GM12878 (cell line): ENCODE measurements at regions of chr2 and their contacts with region 1.

Region 1: GRCh38 chr2:102114290-102114721 is 28.2 kb upstream of the IL1R1 start:
- DNase-seq: peak; percentile 33
- ATAC-seq: peak; percentile 67
- H3K4me3 ChIP-seq: no peak overlapping the region
- H3K27ac ChIP-seq: peak overlapping the region; percentile 17; the same call in 1 of the 2 replicates
- H3K4me1 ChIP-seq: peaks cover 14% of the 10 kb centered on the region
- H3K27me3 ChIP-seq: no peaks in the 10 kb centered on the region
- CTCF ChIP-seq: no peak
- EP300 ChIP-seq: no peak
- POLR2A ChIP-seq: no peak
- RAD21 ChIP-seq: no peak

Region 2: DNA sequence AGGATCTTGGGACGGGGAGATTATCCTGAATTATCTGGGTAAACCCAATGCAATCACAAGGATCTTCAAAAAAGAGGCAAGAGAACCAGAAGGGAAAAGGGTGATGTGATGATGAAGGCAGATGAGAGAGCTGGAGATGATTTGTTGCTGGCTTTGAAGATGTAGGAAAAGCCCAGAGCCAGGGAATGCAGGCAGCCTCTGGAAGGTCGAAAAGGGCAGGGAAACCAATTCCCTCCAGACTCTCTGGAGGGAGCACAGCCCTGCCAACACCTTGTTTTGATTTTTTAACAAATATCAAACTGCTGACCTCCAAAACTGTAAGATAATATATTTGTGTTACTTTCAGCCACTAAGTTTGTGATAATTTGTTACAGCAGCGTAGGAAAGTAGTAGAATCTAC is 171.5 kb before region 1 on chr2:
- CTCF ChIA-PET with region 1: no interaction called
- POLR2A ChIA-PET with region 1: no interaction called
- RAD21 ChIA-PET with region 1: no interaction called
- SMC1A ChIA-PET with region 1: no interaction called
- in situ Hi-C with region 1: no loop called
- intact Hi-C with region 1: no loop called
- DNase-seq: no peak
- ATAC-seq: no peak
- H3K4me3 ChIP-seq: no peak overlapping the region
- H3K27ac ChIP-seq: no peak overlapping the region
- H3K4me1 ChIP-seq: no peaks in the 10 kb centered on the region
- H3K27me3 ChIP-seq: no peaks in the 10 kb centered on the region
- CTCF ChIP-seq: no peak
- EP300 ChIP-seq: no peak
- POLR2A ChIP-seq: no peak
- RAD21 ChIP-seq: no peak

Region 3: DNA sequence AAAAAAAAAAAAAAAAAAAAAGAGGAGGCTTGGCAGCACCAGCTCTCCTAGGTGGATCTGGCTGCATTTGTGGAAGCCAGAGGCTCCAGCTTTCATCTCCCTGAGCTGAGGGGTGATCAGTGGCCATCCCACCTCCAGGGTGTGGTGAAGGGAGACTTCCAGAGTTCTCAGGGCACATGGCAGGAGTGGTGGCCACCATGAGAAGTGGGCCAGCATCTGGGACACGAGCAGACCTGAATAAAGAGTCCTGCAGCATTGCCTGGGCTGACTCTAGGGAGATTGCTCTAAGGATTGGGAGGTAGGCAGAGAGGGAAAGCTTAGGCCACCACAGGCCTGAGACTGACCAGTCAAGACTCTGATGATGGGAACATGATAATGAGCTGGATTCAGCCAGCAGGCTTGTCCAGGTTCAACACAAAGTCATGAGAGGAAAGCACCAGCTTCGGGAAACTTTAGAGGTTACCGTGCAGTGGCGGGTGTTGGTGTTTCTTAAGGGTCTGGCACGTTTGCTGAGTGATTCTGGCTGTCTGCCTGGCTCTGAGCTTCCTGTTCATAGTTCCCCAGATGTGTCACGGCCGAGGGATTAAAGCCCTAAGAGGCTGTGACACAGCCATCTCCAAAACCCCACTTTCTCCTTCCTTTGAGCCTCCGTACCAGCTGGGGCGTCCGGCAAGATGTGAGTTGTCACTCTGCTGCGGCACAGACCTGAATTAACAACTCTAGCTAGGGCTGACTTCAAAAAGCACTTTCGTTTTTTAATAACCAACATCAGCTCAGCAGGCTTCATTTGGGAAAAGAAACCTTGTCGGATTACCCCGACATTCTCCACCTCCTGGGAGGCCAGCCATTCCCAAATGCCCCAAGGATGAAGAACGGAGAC is 10.1 kb before region 1 on chr2:
- CTCF ChIA-PET with region 1: interaction called, 12 read pairs
- POLR2A ChIA-PET with region 1: interaction called, 4 read pairs
- RAD21 ChIA-PET with region 1: interaction called, 27 read pairs
- SMC1A ChIA-PET with region 1: interaction called, 32 read pairs
- in situ Hi-C with region 1: no loop called
- intact Hi-C with region 1: no loop called
- DNase-seq: peak; percentile 67
- ATAC-seq: peak; percentile 79
- H3K4me3 ChIP-seq: peak overlapping the region; percentile 53
- H3K27ac ChIP-seq: peak overlapping the region; percentile 37; the same call in 1 of the 2 replicates
- H3K4me1 ChIP-seq: no peaks in the 10 kb centered on the region
- H3K27me3 ChIP-seq: no peaks in the 10 kb centered on the region
- CTCF ChIP-seq: no peak
- EP300 ChIP-seq: peak in 1 of 2 experiments; percentile 54; a peak in 2 of 4 replicates
- POLR2A ChIP-seq: no peak
- RAD21 ChIP-seq: no peak

Region 4: DNA sequence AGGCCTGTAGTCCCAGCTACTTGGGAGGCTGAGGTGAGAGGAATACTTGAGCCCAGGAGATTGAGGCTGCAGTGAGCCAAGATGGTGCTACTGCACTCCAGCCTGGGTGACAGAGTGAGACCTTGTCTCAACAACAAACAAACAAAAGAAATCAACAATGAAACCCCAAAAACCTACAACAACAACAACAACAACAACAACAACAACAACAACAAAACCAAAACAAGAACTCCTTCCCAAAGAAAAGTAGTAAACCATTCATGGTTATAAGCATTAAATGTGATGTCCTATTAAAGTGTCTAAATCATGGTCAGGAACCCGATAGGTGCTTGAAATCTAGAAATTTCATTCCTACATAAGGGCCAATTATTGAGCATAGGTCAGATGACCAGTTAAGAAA is 14.8 kb after region 1 on chr2:
- CTCF ChIA-PET with region 1: interaction called, 4 read pairs
- POLR2A ChIA-PET with region 1: no interaction called
- RAD21 ChIA-PET with region 1: interaction called, 10 read pairs
- SMC1A ChIA-PET with region 1: interaction called, 17 read pairs
- in situ Hi-C with region 1: no loop called
- intact Hi-C with region 1: no loop called
- DNase-seq: no peak
- ATAC-seq: no peak
- H3K4me3 ChIP-seq: no peak overlapping the region
- H3K27ac ChIP-seq: no peak overlapping the region
- H3K4me1 ChIP-seq: no peaks in the 10 kb centered on the region
- H3K27me3 ChIP-seq: no peaks in the 10 kb centered on the region
- CTCF ChIP-seq: no peak
- EP300 ChIP-seq: no peak
- POLR2A ChIP-seq: no peak
- RAD21 ChIP-seq: no peak

Region 5: GRCh38 chr2:102155642-102156491 is 41.6 kb after region 1 on chr2:
- CTCF ChIA-PET with region 1: no interaction called
- POLR2A ChIA-PET with region 1: no interaction called
- RAD21 ChIA-PET with region 1: no interaction called
- SMC1A ChIA-PET with region 1: interaction called, 10 read pairs
- in situ Hi-C with region 1: no loop called
- intact Hi-C with region 1: no loop called
- DNase-seq: no peak
- ATAC-seq: no peak
- H3K4me3 ChIP-seq: no peak overlapping the region
- H3K27ac ChIP-seq: no peak overlapping the region
- H3K4me1 ChIP-seq: no peaks in the 10 kb centered on the region
- H3K27me3 ChIP-seq: no peaks in the 10 kb centered on the region
- CTCF ChIP-seq: no peak
- EP300 ChIP-seq: no peak
- POLR2A ChIP-seq: no peak
- RAD21 ChIP-seq: no peak

Region 6: GRCh38 chr2:102366406-102367112 is 252.3 kb after region 1 on chr2:
- CTCF ChIA-PET with region 1: no interaction called
- POLR2A ChIA-PET with region 1: no interaction called
- RAD21 ChIA-PET with region 1: no interaction called
- SMC1A ChIA-PET with region 1: no interaction called
- in situ Hi-C with region 1: no loop called
- intact Hi-C with region 1: loop called (anchors 10 kb)
- DNase-seq: peak; percentile 91
- ATAC-seq: peak; percentile 79
- H3K4me3 ChIP-seq: no peak overlapping the region
- H3K27ac ChIP-seq: peak overlapping the region; percentile 93
- H3K4me1 ChIP-seq: peaks cover 23% of the 10 kb centered on the region
- H3K27me3 ChIP-seq: no peaks in the 10 kb centered on the region
- CTCF ChIP-seq: no peak
- EP300 ChIP-seq: peak in 1 of 2 experiments; percentile 45; a peak in 2 of 4 replicates
- POLR2A ChIP-seq: no peak
- RAD21 ChIP-seq: peak; percentile 8; the same call in 1 of the 2 replicates